PC-9 (cell line): ENCODE measurements at regions of chr2 and their contacts with region 1.

Region 1: GRCh38 chr2:54570925-54571694 is 115.0 kb downstream of the SPTBN1 start:
- DNase-seq: peak; percentile 69 to 73
- H3K4me3 ChIP-seq: peak overlapping the region; percentile 33; the same call in 1 of the 2 replicates
- H3K27ac ChIP-seq: peak overlapping the region; percentile 97
- H3K4me1 ChIP-seq: peaks cover 83% of the 10 kb centered on the region
- H3K27me3 ChIP-seq: no peaks in the 10 kb centered on the region
- CTCF ChIP-seq: no peak

Region 2: DNA sequence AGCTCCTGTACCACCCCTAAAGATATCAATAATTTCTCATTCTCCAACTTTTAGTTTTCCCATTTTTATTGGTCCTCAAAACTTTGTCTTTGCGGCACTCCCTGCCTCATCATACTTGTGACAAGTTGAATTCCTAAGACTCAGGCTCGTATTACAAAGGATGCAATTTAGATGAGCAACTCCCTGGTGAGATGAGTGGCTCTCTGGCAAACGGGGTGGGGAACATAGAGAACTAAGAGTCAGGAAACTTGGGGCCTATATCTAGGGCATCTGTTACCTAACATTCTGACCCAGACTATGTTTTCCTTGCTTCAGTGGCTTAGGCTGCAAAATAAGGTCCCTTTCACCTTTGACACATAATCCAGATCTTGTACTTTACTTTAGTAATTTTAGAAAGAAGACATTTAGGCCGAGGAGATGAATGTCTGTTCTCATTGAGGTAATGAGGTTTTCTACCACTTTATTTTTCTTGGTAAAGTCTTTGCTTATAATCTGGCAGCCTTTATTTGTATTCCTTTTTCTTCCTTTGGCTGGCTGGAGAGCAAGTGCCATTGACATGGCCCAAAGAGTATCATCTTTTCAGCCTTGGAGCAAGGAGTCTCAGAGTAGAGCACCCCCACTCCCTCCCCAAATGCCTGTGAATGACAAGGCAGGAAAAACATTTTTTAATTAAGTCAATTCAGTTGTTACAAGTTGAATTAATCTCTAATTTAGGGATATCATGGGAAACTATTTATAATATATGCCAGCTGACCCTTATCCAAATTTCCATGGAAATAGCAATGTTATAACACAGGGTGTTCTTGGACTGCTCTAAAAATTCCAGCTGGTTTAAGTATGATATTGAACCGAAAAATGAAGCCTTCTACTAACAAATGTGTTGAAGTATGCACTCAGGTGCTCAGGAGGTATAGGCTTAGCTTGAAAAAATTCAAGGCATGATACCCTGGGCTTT is 330.3 kb before region 1 on chr2:
- CTCF ChIA-PET with region 1: no interaction called
- POLR2A ChIA-PET with region 1: no interaction called
- intact Hi-C with region 1: no loop called
- DNase-seq: no peak
- H3K4me3 ChIP-seq: no peak overlapping the region
- H3K27ac ChIP-seq: no peak overlapping the region
- H3K4me1 ChIP-seq: no peaks in the 10 kb centered on the region
- H3K27me3 ChIP-seq: no peaks in the 10 kb centered on the region
- CTCF ChIP-seq: no peak

Region 3: GRCh38 chr2:54531558-54531957 is 39.6 kb before region 1 on chr2:
- CTCF ChIA-PET with region 1: interaction called, 4 read pairs
- POLR2A ChIA-PET with region 1: no interaction called
- intact Hi-C with region 1: loop called (anchors 1 kb)
- DNase-seq: peak; percentile 56 to 88
- H3K4me3 ChIP-seq: no peak overlapping the region; the same call in 1 of the 2 replicates
- H3K27ac ChIP-seq: peak overlapping the region; percentile 87
- H3K4me1 ChIP-seq: peaks cover 41% of the 10 kb centered on the region
- H3K27me3 ChIP-seq: no peaks in the 10 kb centered on the region
- CTCF ChIP-seq: no peak

Region 4: GRCh38 chr2:54545702-54546450 is 25.2 kb before region 1 on chr2:
- CTCF ChIA-PET with region 1: no interaction called
- POLR2A ChIA-PET with region 1: no interaction called
- intact Hi-C with region 1: loop called (anchors 1 kb)
- DNase-seq: peak; percentile 40 to 98
- H3K4me3 ChIP-seq: no peak overlapping the region
- H3K27ac ChIP-seq: peak overlapping the region; percentile 92
- H3K4me1 ChIP-seq: peaks cover 41% of the 10 kb centered on the region
- H3K27me3 ChIP-seq: no peaks in the 10 kb centered on the region
- CTCF ChIP-seq: no peak

Region 5: DNA sequence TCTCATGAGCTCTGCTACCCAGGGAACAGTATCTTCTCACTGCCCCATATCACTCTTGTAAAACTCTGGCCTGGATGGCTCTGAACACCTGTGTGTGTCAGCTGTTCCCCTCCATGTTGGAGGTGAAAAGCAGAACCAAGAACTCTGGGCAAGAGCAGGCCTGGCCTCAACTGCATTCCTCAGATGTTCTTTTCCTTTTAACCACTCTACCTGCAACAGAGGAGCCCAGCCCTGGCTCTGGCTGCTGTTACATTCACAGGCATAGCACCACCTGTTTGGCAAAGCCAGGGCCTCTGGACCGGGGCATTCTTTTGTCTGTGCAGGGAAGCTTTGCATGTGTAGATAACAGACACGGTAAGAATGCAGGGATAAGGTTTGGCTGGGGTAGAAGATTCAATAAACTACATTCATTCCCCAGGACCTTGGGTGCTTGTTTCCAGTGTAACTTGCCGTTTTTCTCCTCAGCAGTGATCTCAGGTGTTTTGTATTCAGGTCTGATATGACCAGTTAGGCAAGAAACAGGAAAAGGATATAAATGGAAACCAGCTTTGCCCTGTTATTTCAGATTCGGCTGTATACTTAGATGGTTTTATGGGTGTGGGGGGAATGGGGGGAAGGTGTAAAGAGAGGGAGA is 19.9 kb before region 1 on chr2:
- CTCF ChIA-PET with region 1: no interaction called
- POLR2A ChIA-PET with region 1: no interaction called
- intact Hi-C with region 1: loop called (anchors 1 kb)
- DNase-seq: peak; percentile 55 to 56
- H3K4me3 ChIP-seq: no peak overlapping the region
- H3K27ac ChIP-seq: peak overlapping the region; percentile 20
- H3K4me1 ChIP-seq: peaks cover 56% of the 10 kb centered on the region
- H3K27me3 ChIP-seq: no peaks in the 10 kb centered on the region
- CTCF ChIP-seq: no peak

Region 6: GRCh38 chr2:54558188-54559005 is 12.7 kb before region 1 on chr2:
- CTCF ChIA-PET with region 1: interaction called, 3 read pairs
- POLR2A ChIA-PET with region 1: interaction called, 35 read pairs
- intact Hi-C with region 1: loop called (anchors 1 kb)
- DNase-seq: peak; percentile 72 to 73
- H3K4me3 ChIP-seq: peak overlapping the region; percentile 90
- H3K27ac ChIP-seq: peak overlapping the region; percentile 95
- H3K4me1 ChIP-seq: peaks cover 49% of the 10 kb centered on the region
- H3K27me3 ChIP-seq: no peaks in the 10 kb centered on the region
- CTCF ChIP-seq: no peak

Region 7: DNA sequence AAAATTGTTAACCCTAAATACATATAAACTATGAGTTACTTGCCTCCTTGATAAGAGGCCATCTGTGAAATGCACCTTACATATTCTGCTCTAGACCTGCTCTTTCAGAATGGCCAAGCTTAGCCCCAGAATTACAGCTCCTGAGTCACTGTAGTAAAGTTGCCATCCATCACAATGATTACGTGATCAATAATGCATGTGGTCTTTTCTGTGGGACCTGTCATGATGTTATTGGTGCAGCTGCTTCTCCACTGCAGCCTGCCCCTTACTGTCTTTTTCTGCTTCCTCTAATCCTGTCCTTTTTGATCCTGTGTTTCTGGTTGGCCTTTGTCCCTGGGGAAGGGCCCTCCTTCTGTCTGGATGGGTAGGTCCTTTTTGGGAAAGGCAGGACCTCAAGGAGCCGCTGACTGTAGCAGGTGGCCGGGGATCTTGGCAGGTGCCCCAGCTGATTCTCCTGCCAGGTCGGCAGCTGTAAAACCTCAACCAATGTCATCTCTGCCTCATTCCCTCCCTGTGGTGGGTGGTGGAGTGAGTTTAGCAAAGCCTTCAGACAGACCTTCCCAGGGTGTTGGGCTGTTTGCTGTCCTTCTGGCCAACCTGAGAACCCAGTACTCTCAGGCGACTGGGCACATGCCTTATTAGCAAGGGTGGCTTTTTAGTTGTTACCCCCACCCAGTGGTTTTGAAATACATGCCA is 26.2 kb after region 1 on chr2:
- CTCF ChIA-PET with region 1: no interaction called
- POLR2A ChIA-PET with region 1: interaction called, 14 read pairs
- intact Hi-C with region 1: loop called (anchors 1 kb)
- DNase-seq: no peak
- H3K4me3 ChIP-seq: no peak overlapping the region
- H3K27ac ChIP-seq: no peak overlapping the region
- H3K4me1 ChIP-seq: no peaks in the 10 kb centered on the region
- H3K27me3 ChIP-seq: no peaks in the 10 kb centered on the region
- CTCF ChIP-seq: no peak

Region 8: GRCh38 chr2:54613794-54614257 is 42.7 kb after region 1 on chr2:
- CTCF ChIA-PET with region 1: interaction called, 3 read pairs
- POLR2A ChIA-PET with region 1: no interaction called
- intact Hi-C with region 1: loop called (anchors 5 kb)
- DNase-seq: peak in 1 of 2 experiments; percentile 72
- H3K4me3 ChIP-seq: no peak overlapping the region
- H3K27ac ChIP-seq: peak overlapping the region; percentile 62
- H3K4me1 ChIP-seq: peaks cover 18% of the 10 kb centered on the region
- H3K27me3 ChIP-seq: no peaks in the 10 kb centered on the region
- CTCF ChIP-seq: no peak